Activated CD8-positive, alpha-beta T cell treated with anti-CD3 and anti-CD28 coated beads, Interleukin-2, amount 10 ng/mL, durations not matched to agents 7 days and 5 days (primary cell): ENCODE measurements at regions of chr3 and their contacts with region 1.

Region 1: GRCh38 chr3:16264708-16265454 is at the starts of genes DPH3 and OXNAD1:
- DNase-seq: peak; percentile 100
- ATAC-seq: peak; percentile 95
- H3K4me3 Mint-ChIP-seq: peak within 1 kb of the TSS; percentile 98
- H3K27ac Mint-ChIP-seq: peak within 1 kb of the TSS; percentile 98
- H3K4me1 Mint-ChIP-seq: peaks cover 30% of the 10 kb centered on the region
- H3K27me3 Mint-ChIP-seq: no peaks in the 10 kb centered on the region
- total RNA-seq, gene DPH3: 18.2 to 20.5 TPM
- total RNA-seq, gene OXNAD1: 68.2 to 69.1 TPM

Region 2: DNA sequence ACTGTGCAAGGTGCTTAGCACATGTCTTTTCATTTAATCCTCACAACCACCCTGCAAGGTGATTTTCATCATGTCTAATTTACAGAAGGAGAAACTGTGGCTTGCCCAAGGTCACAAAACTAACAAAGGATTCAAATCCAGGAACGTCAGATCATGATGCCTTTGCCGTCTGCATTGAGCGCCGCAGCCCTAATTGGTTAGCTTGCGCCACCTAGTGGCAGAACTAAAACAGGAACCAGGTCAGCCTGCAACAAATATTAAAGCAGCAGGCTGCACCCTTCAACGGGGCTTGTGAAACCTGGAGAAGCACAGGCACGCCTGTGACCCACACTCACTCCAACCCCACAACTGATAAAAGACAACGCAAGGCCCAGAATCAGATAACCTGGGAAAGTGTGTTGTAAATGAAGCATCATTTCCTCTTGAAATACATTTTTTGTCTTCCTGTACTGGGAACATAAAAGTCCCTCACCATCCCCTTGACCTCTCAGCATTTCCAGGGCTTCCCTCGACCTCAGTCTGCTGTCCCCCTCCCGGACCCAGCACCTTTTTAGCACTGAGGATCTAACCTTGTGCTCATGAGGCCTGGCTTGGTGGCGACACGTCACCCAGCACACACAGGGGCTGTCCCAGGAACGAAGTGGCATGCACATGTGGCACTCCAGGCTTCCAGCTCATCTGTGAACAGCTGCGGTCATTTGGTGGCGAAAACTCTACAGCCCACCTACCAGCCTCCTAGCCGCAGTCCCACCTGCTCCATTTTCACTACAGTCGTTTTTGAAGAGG is 17.4 kb before region 1 on chr3:
- CTCF ChIA-PET with region 1: interaction called, 16 read pairs
- POLR2A ChIA-PET with region 1: no interaction called
- DNase-seq: peak; percentile 86
- ATAC-seq: peak; percentile 90
- H3K4me3 Mint-ChIP-seq: no peak overlapping the region
- H3K27ac Mint-ChIP-seq: no peak overlapping the region
- H3K4me1 Mint-ChIP-seq: peaks cover 12% of the 10 kb centered on the region
- H3K27me3 Mint-ChIP-seq: no peaks in the 10 kb centered on the region

Region 3: GRCh38 chr3:16253601-16254000 is 11.3 kb before region 1 on chr3:
- CTCF ChIA-PET with region 1: interaction called, 16 read pairs
- POLR2A ChIA-PET with region 1: no interaction called
- DNase-seq: no peak
- ATAC-seq: no peak
- H3K4me3 Mint-ChIP-seq: no peak overlapping the region
- H3K27ac Mint-ChIP-seq: no peak overlapping the region
- H3K4me1 Mint-ChIP-seq: peaks cover 15% of the 10 kb centered on the region
- H3K27me3 Mint-ChIP-seq: no peaks in the 10 kb centered on the region

Region 4: DNA sequence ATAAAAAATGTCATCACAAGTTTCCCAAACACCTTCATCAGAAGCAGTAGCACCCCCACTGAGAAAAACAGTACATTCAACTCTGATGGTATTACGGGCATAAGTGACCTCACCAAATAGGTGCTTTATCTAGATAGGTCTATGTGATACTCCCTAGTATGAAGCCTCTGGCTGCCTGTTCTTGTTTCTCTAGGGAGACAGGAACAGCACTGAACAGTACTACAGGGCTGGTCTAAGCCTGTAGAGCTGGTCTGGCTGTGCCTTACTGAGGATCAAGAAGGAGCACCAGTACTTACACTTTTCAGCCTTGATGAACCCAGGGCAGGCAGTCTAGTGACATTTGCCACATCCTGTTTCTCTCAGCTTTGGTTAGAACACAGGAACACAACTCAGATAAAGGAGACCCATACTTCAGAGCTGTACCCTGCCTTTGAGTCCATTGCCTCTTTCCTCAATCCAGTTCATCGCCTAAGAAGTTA is 36.0 kb after region 1 on chr3:
- CTCF ChIA-PET with region 1: interaction called, 10 read pairs
- POLR2A ChIA-PET with region 1: interaction called, 6 read pairs
- DNase-seq: peak; percentile 82
- ATAC-seq: peak; percentile 80
- H3K4me3 Mint-ChIP-seq: peak overlapping the region; percentile 80
- H3K27ac Mint-ChIP-seq: peak overlapping the region; percentile 94
- H3K4me1 Mint-ChIP-seq: peaks cover 97% of the 10 kb centered on the region
- H3K27me3 Mint-ChIP-seq: no peaks in the 10 kb centered on the region

Region 5: DNA sequence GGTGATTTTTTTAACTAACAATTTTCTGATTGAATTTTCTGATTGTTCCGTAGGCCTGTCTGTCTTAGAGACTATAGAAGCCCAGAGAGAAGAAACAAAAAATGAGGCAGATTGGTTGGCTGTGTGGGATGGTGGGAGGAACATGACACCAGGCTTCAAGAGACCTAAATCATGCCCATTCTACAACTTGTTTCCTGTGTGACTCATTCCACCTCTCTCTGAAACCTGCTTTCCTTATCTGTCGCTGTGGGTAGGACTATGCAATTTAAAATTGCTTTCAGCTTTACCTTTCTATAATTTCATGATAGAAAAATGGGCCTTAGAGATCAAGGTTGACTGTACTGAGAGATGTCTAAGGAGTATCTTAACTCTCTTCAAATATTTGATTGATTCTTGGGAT is 44.7 kb after region 1 on chr3:
- CTCF ChIA-PET with region 1: interaction called, 14 read pairs
- POLR2A ChIA-PET with region 1: interaction called, 11 read pairs
- DNase-seq: peak; percentile 81
- ATAC-seq: peak; percentile 79
- H3K4me3 Mint-ChIP-seq: peak overlapping the region; percentile 76
- H3K27ac Mint-ChIP-seq: peak overlapping the region; percentile 93
- H3K4me1 Mint-ChIP-seq: peaks cover 94% of the 10 kb centered on the region
- H3K27me3 Mint-ChIP-seq: no peaks in the 10 kb centered on the region

Region 6: GRCh38 chr3:16319307-16319706 is 54.4 kb after region 1 on chr3:
- CTCF ChIA-PET with region 1: interaction called, 95 read pairs
- POLR2A ChIA-PET with region 1: interaction called, 11 read pairs
- DNase-seq: peak; percentile 91
- ATAC-seq: peak; percentile 85
- H3K4me3 Mint-ChIP-seq: peak overlapping the region; percentile 30
- H3K27ac Mint-ChIP-seq: peak overlapping the region; percentile 77
- H3K4me1 Mint-ChIP-seq: peaks cover 69% of the 10 kb centered on the region
- H3K27me3 Mint-ChIP-seq: no peaks in the 10 kb centered on the region